OCI-LY7 (cell line): ENCODE measurements at regions of chr3 and their contacts with region 1.

Region 1: GRCh38 chr3:123584988-123585937 is at the start of gene HACD2:
- DNase-seq: peak; percentile 97
- H3K4me3 ChIP-seq: peak within 1 kb of the TSS; percentile 97
- H3K27ac ChIP-seq: peak within 1 kb of the TSS; percentile 74
- H3K4me1 ChIP-seq: peaks cover 25% of the 10 kb centered on the region
- CTCF ChIP-seq: no peak
- total RNA-seq, gene HACD2: 6.5 and 10.2 TPM in 2 replicates

Region 2: GRCh38 chr3:122514123-122515019 is 1070.9 kb before region 1 on chr3 and contains the start of gene KPNA1:
- CTCF ChIA-PET with region 1: no interaction called
- POLR2A ChIA-PET with region 1: no interaction called
- intact Hi-C with region 1: loop called (anchors 10 kb)
- DNase-seq: peak; percentile 93
- H3K4me3 ChIP-seq: peak within 1 kb of the TSS; percentile 75
- H3K27ac ChIP-seq: peak within 1 kb of the TSS; percentile 74
- H3K4me1 ChIP-seq: peaks cover 25% of the 10 kb centered on the region
- CTCF ChIP-seq: no peak
- total RNA-seq, gene KPNA1: 20.0 and 24.6 TPM in 2 replicates

Region 3: DNA sequence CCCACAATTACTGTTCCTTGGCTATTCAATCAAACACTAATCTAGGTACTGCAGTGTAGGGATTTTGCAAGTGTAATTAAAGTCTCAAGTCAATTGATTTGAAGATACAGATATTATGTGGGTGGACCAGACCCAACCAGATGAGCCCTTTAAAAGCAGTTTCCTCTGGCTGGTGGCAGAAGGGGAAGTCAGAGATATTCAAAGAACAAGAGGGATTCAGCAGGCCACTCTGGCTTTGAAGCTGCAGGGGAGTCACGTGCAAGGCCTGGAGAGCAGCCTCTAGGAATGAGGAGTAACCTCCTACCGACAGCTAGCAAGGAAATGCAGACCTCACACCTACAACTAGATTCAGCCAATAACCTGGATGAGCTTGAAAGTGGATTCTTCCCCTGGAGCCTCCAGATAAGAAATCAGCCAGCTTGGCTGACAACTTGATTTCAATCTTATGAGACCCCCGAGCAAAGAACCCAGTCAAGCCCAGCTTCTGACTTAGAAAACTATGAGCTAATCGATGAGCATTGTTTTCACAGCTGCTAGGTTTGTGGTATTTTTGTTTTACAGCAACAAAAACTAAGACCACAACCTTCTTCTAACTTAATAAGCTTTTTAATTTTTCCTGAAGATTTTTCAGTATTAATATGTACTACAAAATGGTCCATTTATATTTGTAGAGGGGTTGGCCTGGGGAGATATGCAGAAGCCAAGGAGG is 13.8 kb before region 1 on chr3:
- CTCF ChIA-PET with region 1: no interaction called
- POLR2A ChIA-PET with region 1: interaction called, 11 read pairs
- intact Hi-C with region 1: no loop called
- DNase-seq: no peak
- H3K4me3 ChIP-seq: no peak overlapping the region
- H3K27ac ChIP-seq: no peak overlapping the region
- H3K4me1 ChIP-seq: peaks cover 6% of the 10 kb centered on the region
- CTCF ChIP-seq: no peak

Region 4: GRCh38 chr3:123993818-123994217 is 408.6 kb after region 1 on chr3:
- CTCF ChIA-PET with region 1: no interaction called
- POLR2A ChIA-PET with region 1: no interaction called
- intact Hi-C with region 1: no loop called
- DNase-seq: no peak
- H3K4me3 ChIP-seq: no peak overlapping the region
- H3K27ac ChIP-seq: no peak overlapping the region
- H3K4me1 ChIP-seq: no peaks in the 10 kb centered on the region
- CTCF ChIP-seq: no peak